Heart left ventricle (tissue), 16 donors: ENCODE measurements at regions of chr16 and their contacts with region 1.

Region 1: DNA sequence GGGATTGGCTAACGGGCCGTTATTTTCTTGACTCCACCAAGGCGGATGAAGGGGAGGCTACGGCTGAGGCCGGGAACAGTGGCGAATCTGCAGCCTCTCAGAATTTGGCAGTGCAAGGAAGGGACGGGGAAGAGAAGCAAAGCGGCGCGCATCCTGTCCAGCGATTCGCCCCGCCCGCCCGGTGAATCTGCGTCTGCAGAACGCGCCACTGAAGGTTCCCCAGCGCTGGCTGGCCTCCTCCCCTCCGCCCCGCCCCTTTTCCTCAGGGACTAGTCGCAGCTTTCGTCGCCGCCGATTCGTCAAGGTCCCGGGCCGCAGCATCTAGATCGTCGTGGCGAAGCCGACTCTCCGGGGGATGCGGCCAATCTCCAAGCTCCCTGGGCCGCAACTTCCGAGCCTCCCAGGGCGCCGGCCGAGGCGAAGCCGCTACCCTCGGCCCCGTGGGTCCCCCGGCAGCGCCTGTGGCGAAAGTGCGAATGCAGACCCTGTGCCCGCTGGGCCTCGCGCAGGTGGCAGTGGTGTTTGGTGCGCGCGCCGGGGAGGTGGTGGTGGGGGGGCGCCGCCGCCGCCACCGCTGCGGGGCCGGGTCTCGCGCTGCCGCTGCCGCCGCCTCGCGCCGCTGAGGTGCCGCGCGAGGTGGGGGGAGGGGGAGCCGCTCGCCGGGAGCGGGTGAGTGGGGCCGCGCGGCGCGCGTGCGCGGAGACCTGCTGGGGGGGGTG is at the start of gene SETD1A:
- DNase-seq: peak; percentile 98 to 99 (median 98)
- ATAC-seq: peak; percentile 90 to 96 (median 91)
- H3K4me3 ChIP-seq: peak within 1 kb of the TSS; percentile 37 to 93 (median 82)
- H3K27ac ChIP-seq: peak within 1 kb of the TSS; percentile 86 to 99 (median 98)
- H3K4me1 ChIP-seq: peaks cover 0 to 37% (median 24%) of the 10 kb centered on the region in 12 donors
- H3K27me3 ChIP-seq: no peaks in the 10 kb centered on the region
- CTCF ChIP-seq: peak in 1 of 12 donors; percentile 7
- POLR2A ChIP-seq: peak in 1 of 2 donors; percentile 44
- total RNA-seq, gene SETD1A: 4.6 to 12.1 (median 9.0) TPM

Region 2: GRCh38 chr16:30692381-30693064 is 265.1 kb before region 1 on chr16:
- intact Hi-C with region 1: no loop called
- DNase-seq: no peak
- ATAC-seq: no peak
- H3K4me3 ChIP-seq: no peak overlapping the region
- H3K27ac ChIP-seq: no peak overlapping the region
- H3K4me1 ChIP-seq: peaks cover 0 to 19% (median 2%) of the 10 kb centered on the region in 12 donors
- H3K27me3 ChIP-seq: no peaks in the 10 kb centered on the region
- CTCF ChIP-seq: no peak
- POLR2A ChIP-seq: no peak

Region 3: GRCh38 chr16:30893744-30894539 is 63.7 kb before region 1 on chr16 and contains the start of gene BCL7C:
- intact Hi-C with region 1: loop called in 1 of 10 experiments (anchors 10 kb)
- DNase-seq: peak; percentile 96 to 97 (median 96)
- ATAC-seq: peak; percentile 50 to 90 (median 81)
- H3K4me3 ChIP-seq: peak within 1 kb of the TSS; percentile 79 to 98 (median 89)
- H3K27ac ChIP-seq: peak within 1 kb of the TSS; percentile 81 to 99 (median 95)
- H3K4me1 ChIP-seq: peaks cover 0 to 46% (median 33%) of the 10 kb centered on the region in 12 donors
- H3K27me3 ChIP-seq: no peaks in the 10 kb centered on the region
- CTCF ChIP-seq: peak; percentile 21 to 82 (median 56)
- POLR2A ChIP-seq: peak in 1 of 2 donors; percentile 33
- total RNA-seq, gene BCL7C: 23.1 to 35.5 (median 28.1) TPM

Region 4: DNA sequence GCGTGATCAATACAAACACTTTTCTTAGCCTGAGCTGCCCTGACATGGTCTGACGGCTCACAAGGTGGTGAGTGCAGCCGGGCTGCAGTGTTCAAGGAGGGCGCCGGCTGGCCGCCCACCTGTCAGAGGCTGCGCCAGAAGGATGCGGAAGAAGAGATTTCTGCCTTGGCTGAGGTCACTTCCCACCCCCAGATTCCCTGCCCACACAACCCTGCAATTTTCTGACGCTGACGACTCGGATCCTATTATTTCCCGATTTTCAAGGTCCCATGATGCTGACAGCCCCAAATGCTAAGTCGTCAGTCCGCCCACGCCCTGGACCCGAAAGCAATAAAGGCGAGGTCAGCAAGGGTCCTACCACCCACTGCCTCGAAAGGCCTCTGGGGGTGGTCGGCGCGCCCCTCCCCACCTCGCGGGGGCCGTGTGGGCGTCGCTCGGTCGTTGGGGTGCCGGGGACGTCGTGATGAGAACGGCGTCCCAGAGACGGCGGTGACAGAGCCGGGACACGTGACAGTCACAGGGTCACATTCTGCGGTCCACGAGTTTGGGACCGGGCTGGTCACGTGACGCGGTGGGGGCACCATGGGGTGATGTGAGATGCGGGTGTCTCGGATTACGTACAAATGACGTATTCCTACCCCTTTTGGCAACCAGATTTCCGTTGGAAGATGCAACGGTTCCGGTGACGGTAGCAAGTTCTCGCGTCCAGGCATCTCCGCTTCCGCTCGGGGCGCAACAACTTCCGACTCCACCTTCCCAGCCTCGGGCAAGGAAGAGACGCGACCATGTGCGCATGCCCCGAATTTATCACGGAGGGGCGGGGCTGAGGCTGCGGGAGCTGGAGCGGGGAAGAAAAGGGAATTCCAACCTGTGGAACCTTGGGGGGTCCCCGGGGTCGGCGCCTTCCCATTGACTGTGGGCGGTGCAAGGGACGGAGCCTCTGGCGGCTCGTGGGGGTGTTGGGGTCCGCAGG is 75.4 kb after region 1 on chr16 and contains the start of gene STX4:
- intact Hi-C with region 1: loop called in 1 of 10 experiments (anchors 2 kb)
- DNase-seq: peak; percentile 98 to 99 (median 98)
- ATAC-seq: peak; percentile 93 to 95 (median 94)
- H3K4me3 ChIP-seq: peak within 1 kb of the TSS; percentile 73 to 100 (median 90)
- H3K27ac ChIP-seq: peak within 1 kb of the TSS; percentile 91 to 99 (median 96)
- H3K4me1 ChIP-seq: peaks cover 4 to 31% (median 18%) of the 10 kb centered on the region in 12 donors
- H3K27me3 ChIP-seq: no peaks in the 10 kb centered on the region
- CTCF ChIP-seq: no peak
- POLR2A ChIP-seq: no peak
- total RNA-seq, gene STX4: 19.5 to 65.8 (median 39.7) TPM

Region 5: DNA sequence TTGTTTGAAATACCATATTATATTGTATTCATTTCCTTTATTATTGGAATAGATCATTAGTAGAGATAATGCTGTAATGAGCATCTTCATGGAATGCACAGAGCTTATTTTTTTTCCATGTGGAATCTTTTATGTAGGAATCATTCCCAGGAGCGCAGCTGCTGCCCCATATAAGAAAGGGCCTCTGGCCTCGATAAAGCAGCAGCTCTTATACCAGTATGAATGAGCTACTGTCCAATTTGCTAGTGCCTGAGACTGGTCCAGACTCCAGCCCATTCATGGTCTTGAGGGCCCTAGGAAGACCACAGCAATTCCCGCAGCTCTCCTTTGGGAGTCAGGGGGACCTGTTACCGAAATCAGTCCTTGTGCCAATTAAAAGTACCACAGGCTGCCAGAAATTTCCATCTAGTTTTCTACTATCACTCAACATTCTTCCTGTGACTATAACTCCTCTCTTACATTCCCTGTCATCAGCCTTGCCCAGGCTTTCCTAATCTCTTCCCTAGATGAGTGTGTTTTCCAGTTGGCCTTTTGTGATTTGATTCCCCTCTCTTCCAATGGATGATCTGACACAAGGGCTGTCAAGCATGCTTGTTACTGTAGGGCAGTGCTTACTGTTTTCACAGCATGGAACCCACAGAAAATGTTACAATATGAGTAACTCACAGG is 483.0 kb after region 1 on chr16:
- intact Hi-C with region 1: loop called in 1 of 10 experiments (anchors 10 kb)
- DNase-seq: no peak
- ATAC-seq: no peak
- H3K4me3 ChIP-seq: no peak overlapping the region
- H3K27ac ChIP-seq: peak overlapping the region in 9 of 12 donors; percentile 17 to 80 (median 46)
- H3K4me1 ChIP-seq: peaks cover 0 to 29% (median 11%) of the 10 kb centered on the region in 12 donors
- H3K27me3 ChIP-seq: no peaks in the 10 kb centered on the region
- CTCF ChIP-seq: no peak
- POLR2A ChIP-seq: no peak

Region 6: DNA sequence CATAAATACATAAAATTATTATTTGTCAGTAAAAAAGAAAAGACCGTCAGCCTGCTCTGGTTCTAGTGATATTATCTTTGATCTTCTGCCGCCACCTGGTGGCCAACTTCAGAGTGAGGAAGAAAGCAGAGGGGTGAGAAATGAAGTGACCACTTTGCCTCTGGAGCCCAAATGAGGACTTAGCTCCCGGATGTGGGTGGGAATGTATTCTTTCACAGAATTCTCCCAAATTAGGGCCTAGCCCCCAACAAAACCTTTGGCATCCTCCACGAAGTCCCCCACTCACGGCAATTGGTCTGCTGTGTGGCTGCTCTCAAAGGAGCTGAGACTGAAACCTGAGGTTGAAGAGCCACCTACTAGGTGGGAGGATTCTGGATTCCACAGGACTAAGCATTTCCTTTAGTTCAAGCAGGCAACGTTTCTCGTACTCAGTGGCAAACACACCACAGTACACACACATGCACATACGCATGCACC is 911.1 kb after region 1 on chr16:
- intact Hi-C with region 1: loop called in 1 of 10 experiments (anchors 10 kb)
- DNase-seq: peak; percentile 72 to 84 (median 77)
- ATAC-seq: peak in 3 of 4 donors; percentile 55 to 69 (median 64)
- H3K4me3 ChIP-seq: peak overlapping the region in 2 of 12 donors; percentile 13 to 37
- H3K27ac ChIP-seq: peak overlapping the region in 4 of 12 donors; percentile 14 to 91 (median 18)
- H3K4me1 ChIP-seq: peaks cover 0 to 36% (median 8%) of the 10 kb centered on the region in 12 donors
- H3K27me3 ChIP-seq: no peaks in the 10 kb centered on the region
- CTCF ChIP-seq: peak; percentile 75 to 89 (median 80)
- POLR2A ChIP-seq: no peak